Right cardiac atrium (tissue), 5 donors: ENCODE measurements at regions of chr4 and their contacts with region 1.

Region 1: GRCh38 chr4:150078637-150079581 is 664 bp downstream of the DCLK2 start:
- DNase-seq: peak; percentile 72 to 86 (median 86)
- ATAC-seq: peak; percentile 84 to 89
- H3K4me3 ChIP-seq: peak overlapping the region; percentile 82
- H3K27ac ChIP-seq: peak overlapping the region; percentile 73
- H3K4me1 ChIP-seq: no peaks in the 10 kb centered on the region
- H3K27me3 ChIP-seq: no peaks in the 10 kb centered on the region

Region 2: DNA sequence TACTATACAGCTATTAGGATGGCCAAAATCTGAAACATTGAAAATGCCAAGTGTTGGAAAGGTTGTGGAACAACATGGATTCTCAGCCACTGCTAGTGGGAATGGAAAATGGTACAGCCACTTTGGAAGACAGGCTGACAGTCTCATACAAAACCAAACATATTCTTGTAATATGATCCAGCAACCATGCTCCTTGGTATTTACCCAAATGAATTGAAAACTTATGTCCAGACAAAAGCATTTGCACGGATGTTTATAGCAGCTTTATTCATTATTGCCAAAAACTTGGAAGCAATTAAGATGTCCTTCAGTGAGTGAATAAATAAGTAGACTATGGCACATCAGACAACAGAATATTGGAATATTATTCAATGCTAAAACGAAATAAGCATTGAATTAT is 106.5 kb before region 1 on chr4:
- intact Hi-C with region 1: no loop called
- DNase-seq: no peak
- ATAC-seq: no peak
- H3K4me3 ChIP-seq: no peak overlapping the region
- H3K27ac ChIP-seq: no peak overlapping the region
- H3K4me1 ChIP-seq: no peaks in the 10 kb centered on the region
- H3K27me3 ChIP-seq: peaks cover 2% of the 10 kb centered on the region

Region 3: GRCh38 chr4:150181536-150181935 is 102.6 kb after region 1 on chr4:
- intact Hi-C with region 1: loop called in 1 of 4 experiments (anchors 10 kb)
- DNase-seq: no peak
- ATAC-seq: peak; percentile 37 to 38
- H3K4me3 ChIP-seq: no peak overlapping the region
- H3K27ac ChIP-seq: no peak overlapping the region
- H3K4me1 ChIP-seq: no peaks in the 10 kb centered on the region
- H3K27me3 ChIP-seq: no peaks in the 10 kb centered on the region

Region 4: GRCh38 chr4:150209140-150209829 is 130.4 kb after region 1 on chr4:
- intact Hi-C with region 1: loop called in 1 of 4 experiments (anchors 5 kb)
- DNase-seq: peak; percentile 66 to 87 (median 80)
- ATAC-seq: peak; percentile 63 to 75
- H3K4me3 ChIP-seq: no peak overlapping the region
- H3K27ac ChIP-seq: no peak overlapping the region
- H3K4me1 ChIP-seq: peaks cover 2% of the 10 kb centered on the region
- H3K27me3 ChIP-seq: no peaks in the 10 kb centered on the region